Right ventricle myocardium superior (tissue), 1 donor: ENCODE measurements at regions of chr15 and their contacts with region 1.

Region 1: GRCh38 chr15:27826902-27827714 is 272.0 kb downstream of the OCA2 start:
- DNase-seq: no peak
- ATAC-seq: no peak

Region 2: DNA sequence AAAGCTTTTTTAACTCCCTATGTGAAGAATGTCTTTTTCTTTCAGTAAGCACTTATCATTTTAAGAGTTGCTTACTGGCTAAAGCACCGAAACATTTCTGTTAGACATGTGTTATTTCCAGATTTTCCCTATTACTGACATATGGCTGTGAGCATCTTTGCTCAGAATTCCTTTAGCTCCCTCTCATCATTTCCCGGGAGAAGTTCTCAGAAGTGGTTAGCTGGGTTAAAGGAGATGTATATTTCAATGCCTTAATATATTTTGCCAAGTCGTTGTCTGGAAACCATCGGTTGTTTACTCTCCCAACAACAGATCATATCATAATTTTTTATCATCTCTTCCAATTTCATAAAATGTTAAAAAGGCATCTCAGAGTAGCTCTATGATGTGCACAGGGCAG is 124.5 kb before region 1 on chr15:
- intact Hi-C with region 1: no loop called
- DNase-seq: no peak
- ATAC-seq: no peak

Region 3: GRCh38 chr15:27768732-27769475 is 58.2 kb before region 1 on chr15:
- intact Hi-C with region 1: loop called (anchors 10 kb)
- DNase-seq: no peak
- ATAC-seq: no peak

Region 4: GRCh38 chr15:27884726-27885125 is 57.6 kb after region 1 on chr15:
- intact Hi-C with region 1: no loop called
- DNase-seq: no peak
- ATAC-seq: no peak